CD8-positive, alpha-beta T cell (primary cell): ENCODE measurements at regions of chr17 and their contacts with region 1.

Region 1: GRCh38 chr17:28571255-28572122 is at the start of gene PIGS:
- DNase-seq: peak; percentile 74 to 94 (median 90)
- ATAC-seq: peak; percentile 95
- H3K4me3 ChIP-seq: peak within 1 kb of the TSS; percentile 98 to 100
- H3K4me3 Mint-ChIP-seq: peak within 1 kb of the TSS; percentile 97
- H3K27ac ChIP-seq: peak within 1 kb of the TSS; percentile 69 to 92
- H3K27ac Mint-ChIP-seq: peak within 1 kb of the TSS; percentile 96
- H3K4me1 ChIP-seq: peaks cover 45% of the 10 kb centered on the region
- H3K4me1 Mint-ChIP-seq: peaks cover 69% of the 10 kb centered on the region
- H3K27me3 ChIP-seq: no peaks in the 10 kb centered on the region
- H3K27me3 Mint-ChIP-seq: no peaks in the 10 kb centered on the region
- CTCF ChIP-seq: no peak
- total RNA-seq, gene PIGS: 46.2 to 60.0 TPM

Region 2: GRCh38 chr17:28612936-28613872 is 41.7 kb after region 1 on chr17:
- CTCF ChIA-PET with region 1: interaction called, 11 read pairs
- POLR2A ChIA-PET with region 1: interaction called, 4 read pairs
- intact Hi-C with region 1: no loop called
- DNase-seq: peak in 8 of 9 experiments; percentile 7 to 62 (median 44)
- ATAC-seq: peak; percentile 57
- H3K4me3 ChIP-seq: no peak overlapping the region
- H3K4me3 Mint-ChIP-seq: no peak overlapping the region
- H3K27ac ChIP-seq: no peak overlapping the region
- H3K27ac Mint-ChIP-seq: no peak overlapping the region
- H3K4me1 ChIP-seq: no peaks in the 10 kb centered on the region
- H3K4me1 Mint-ChIP-seq: peaks cover 3% of the 10 kb centered on the region
- H3K27me3 ChIP-seq: no peaks in the 10 kb centered on the region
- H3K27me3 Mint-ChIP-seq: no peaks in the 10 kb centered on the region
- CTCF ChIP-seq: peak; percentile 74